Activated CD4-positive, alpha-beta T cell treated with anti-CD3 and anti-CD28 coated beads for 36 hours (primary cell): ENCODE measurements at regions of chr2 and their contacts with region 1.

Region 1: DNA sequence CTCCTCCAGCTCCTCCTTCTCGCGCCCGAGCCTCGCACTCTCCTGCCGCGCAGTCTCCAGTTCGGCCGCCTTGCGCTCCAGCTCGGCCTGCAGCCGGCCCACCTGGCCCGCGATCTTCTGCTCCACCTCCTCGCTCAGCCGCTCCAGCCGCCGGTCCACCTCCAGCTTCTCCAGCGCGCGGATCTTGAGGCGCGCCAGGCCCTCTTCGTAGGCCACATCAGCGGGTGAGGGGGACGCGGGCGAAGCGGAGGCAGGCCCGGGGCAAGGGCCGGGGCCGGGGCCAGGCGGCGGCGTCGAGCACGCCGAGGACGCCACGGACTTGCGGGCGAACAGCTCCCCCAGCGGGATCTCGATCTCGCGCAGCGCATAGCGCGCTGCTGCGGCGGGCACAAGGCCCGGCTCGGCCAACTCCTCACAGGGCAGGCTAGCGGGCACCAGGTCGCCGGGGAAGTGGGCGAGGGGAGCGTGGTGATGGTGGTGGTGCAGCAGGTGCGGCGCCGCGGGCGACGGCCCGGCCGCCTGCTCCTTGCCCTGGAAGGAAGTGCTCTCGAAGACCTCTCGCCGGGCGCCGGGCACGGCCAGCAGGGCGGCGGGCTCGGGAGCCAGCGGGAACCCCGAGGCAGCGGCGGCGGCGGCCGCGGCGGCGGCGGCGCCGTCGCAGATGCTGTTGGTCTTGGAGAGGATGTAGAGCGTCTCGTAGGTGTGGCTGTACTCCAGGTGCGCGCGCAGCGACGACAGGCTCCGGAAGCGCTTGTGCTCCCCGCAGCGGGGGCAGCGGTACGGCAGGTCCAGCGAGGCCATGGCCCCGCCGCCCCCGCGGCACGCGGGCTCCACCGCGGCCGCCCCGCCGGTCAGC is 15.2 kb downstream of the FBXO41 start:
- DNase-seq: peak; percentile 86
- ATAC-seq: peak; percentile 95
- H3K4me3 Mint-ChIP-seq: peak overlapping the region; percentile 18
- H3K27ac Mint-ChIP-seq: no peak overlapping the region
- H3K4me1 Mint-ChIP-seq: peaks cover 21% of the 10 kb centered on the region
- H3K27me3 Mint-ChIP-seq: no peaks in the 10 kb centered on the region

Region 2: GRCh38 chr2:73035899-73036711 is 233.0 kb before region 1 on chr2:
- CTCF ChIA-PET with region 1: no interaction called
- POLR2A ChIA-PET with region 1: no interaction called
- intact Hi-C with region 1: no loop called
- DNase-seq: no peak
- ATAC-seq: no peak
- H3K4me3 Mint-ChIP-seq: no peak overlapping the region
- H3K27ac Mint-ChIP-seq: no peak overlapping the region
- H3K4me1 Mint-ChIP-seq: no peaks in the 10 kb centered on the region
- H3K27me3 Mint-ChIP-seq: no peaks in the 10 kb centered on the region

Region 3: GRCh38 chr2:73284296-73285158 is 15.5 kb after region 1 on chr2 and contains the start of gene FBXO41:
- CTCF ChIA-PET with region 1: interaction called, 7 read pairs
- POLR2A ChIA-PET with region 1: interaction called, 3 read pairs
- intact Hi-C with region 1: loop called in 1 of 2 experiments (anchors 1 kb)
- DNase-seq: peak; percentile 86
- ATAC-seq: peak; percentile 85
- H3K4me3 Mint-ChIP-seq: peak within 1 kb of the TSS; percentile 78
- H3K27ac Mint-ChIP-seq: peak within 1 kb of the TSS; percentile 75
- H3K4me1 Mint-ChIP-seq: peaks cover 15% of the 10 kb centered on the region
- H3K27me3 Mint-ChIP-seq: peaks cover 19% of the 10 kb centered on the region
- total RNA-seq, gene FBXO41: 27.7 to 29.5 TPM